HCT116 (cell line): ENCODE measurements at regions of chr7 and their contacts with region 1.

Region 1: DNA sequence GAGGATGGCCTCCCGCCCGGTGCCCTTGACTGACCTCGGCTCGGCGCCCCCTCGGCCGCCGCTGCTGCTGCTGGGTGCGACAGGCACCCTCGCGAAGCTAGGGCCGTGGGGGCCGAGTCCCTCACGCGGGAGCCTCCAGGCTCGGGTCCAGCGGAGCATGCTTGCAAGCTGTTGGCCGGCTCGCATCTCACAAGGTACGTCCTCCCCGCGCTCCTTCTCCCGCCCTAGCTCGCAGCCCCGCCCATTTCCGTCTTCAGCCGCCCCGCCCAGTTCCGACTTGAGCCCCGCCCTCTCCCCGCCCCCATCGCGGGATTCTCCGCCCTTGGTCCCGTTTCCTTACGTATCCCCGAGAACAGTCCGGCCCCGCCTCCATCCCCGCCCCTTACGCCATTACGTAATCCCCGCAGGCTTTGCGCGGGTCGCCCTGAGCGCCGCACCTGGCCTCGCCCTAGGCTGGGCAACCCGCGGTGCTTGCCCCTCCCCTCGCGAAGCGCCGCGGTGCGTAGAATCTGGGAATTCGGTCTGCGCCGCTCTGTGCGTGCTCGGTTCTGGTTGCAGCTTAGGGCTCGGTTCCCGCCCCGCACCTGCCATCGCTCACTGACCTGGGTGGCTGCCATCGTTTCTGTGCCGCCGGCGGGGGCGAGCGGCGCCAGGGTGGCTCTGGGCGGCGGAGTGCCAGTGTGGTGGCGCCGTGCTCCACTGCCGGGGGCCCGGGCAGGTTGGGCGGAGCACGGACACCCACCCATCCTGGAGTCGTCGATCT is at the start of gene ABHD11:
- DNase-seq: peak; percentile 95
- ATAC-seq: peak; percentile 68
- H3K4me3 ChIP-seq: peak within 1 kb of the TSS; percentile 81 to 91
- H3K27ac ChIP-seq: peak within 1 kb of the TSS; percentile 95
- H3K4me1 ChIP-seq: peaks cover 52 to 84% of the 10 kb centered on the region in 2 experiments
- H3K27me3 ChIP-seq: no peaks in the 10 kb centered on the region
- CTCF ChIP-seq: no peak
- POLR2A ChIP-seq: peak; percentile 87
- RAD21 ChIP-seq: no peak
- total RNA-seq, gene ABHD11: 69.8 TPM

Region 2: DNA sequence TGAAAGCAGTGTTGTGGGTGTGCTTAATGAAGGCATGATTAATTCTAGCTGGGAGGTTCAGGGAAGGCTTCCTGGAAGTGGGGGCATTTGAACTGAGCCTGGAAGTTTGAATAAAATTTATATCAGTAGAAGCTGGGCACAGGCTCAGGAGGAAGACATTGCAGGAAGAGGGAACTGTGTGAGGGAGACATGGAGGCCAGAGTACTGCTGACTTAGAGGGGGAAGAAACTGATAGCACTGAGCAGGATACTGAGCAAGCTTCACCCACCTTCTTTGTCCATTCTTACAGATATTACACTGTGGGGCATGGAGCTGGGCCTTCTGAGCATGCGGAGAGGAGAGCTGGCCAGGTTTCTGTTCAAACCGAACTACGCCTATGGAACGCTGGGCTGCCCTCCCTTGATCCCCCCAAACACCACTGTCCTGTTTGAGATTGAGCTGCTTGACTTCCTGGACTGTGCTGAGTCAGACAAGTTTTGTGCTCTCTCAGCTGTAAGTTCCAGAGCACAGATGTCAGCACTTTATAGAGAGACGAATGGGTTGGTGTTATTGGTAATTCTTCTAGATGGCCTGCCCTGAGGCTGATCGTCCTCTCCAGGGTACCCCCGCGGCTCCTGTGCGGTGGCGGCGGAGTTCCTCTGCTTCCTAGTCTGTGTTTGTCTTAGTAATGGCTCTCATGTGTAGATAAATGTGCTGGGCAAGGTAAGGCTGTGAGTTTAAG is 408.8 kb before region 1 on chr7:
- CTCF ChIA-PET with region 1: no interaction called
- POLR2A ChIA-PET with region 1: no interaction called
- RAD21 ChIA-PET with region 1: no interaction called
- intact Hi-C with region 1: loop called (anchors 10 kb)
- DNase-seq: no peak
- ATAC-seq: no peak
- H3K4me3 ChIP-seq: no peak overlapping the region
- H3K27ac ChIP-seq: no peak overlapping the region
- H3K4me1 ChIP-seq: no peaks in the 10 kb centered on the region
- H3K27me3 ChIP-seq: no peaks in the 10 kb centered on the region
- CTCF ChIP-seq: no peak
- POLR2A ChIP-seq: no peak
- RAD21 ChIP-seq: no peak

Region 3: DNA sequence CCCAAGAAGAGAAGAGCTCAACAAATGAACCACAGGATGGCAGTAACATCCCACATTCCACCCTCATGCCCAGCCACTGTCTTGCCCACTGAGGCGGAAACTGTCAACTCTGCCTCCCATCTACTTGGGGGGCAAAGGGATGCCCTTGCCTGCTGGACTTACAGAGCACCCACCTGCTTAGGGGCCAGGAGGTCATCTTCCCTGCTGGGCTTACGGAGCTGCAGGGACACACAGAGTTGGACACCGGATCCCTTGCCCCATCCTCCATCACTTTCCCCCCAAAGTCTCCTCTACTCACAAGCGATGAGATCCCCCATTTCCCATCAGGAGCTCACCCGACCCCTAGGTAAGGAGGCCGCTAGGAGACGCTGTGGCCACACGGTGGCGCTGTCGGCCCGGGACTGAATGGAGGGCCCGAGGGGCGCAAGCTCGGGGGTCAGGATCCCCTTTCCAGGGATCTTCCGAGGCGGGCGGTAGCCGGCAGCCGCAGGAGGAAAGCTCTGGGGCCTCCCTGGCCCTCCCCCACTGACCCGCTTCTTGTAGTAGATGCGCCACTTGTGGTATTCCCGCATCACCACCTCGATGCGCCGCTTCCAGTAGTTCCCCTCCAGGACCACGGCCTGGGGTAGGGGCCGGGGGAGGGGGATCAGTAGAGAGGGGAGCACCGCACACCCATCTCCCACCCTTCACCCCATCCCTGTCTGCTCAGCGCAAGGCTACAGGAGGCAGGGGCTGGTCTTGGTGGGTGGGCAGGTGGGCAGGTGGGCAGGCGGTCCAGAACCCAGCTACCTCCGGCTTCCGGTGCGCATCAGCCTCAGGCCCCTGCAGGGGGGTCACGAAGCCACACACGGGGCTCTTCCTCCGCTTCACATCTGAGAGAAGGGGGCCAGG is 131.7 kb before region 1 on chr7:
- CTCF ChIA-PET with region 1: interaction called, 18 read pairs
- POLR2A ChIA-PET with region 1: interaction called, 3 read pairs
- RAD21 ChIA-PET with region 1: interaction called in 1 of 2 experiments, 7 read pairs
- intact Hi-C with region 1: loop called (anchors 1 kb)
- DNase-seq: no peak
- ATAC-seq: peak; percentile 71
- H3K4me3 ChIP-seq: no peak overlapping the region
- H3K27ac ChIP-seq: no peak overlapping the region
- H3K4me1 ChIP-seq: peaks cover 16 to 40% of the 10 kb centered on the region in 2 experiments
- H3K27me3 ChIP-seq: no peaks in the 10 kb centered on the region
- CTCF ChIP-seq: peak; percentile 89 to 99 (median 94)
- POLR2A ChIP-seq: no peak
- RAD21 ChIP-seq: peak; percentile 93

Region 4: GRCh38 chr7:73811760-73812168 is 73.0 kb after region 1 on chr7:
- CTCF ChIA-PET with region 1: interaction called, 4 read pairs
- POLR2A ChIA-PET with region 1: interaction called, 6 read pairs
- RAD21 ChIA-PET with region 1: no interaction called
- intact Hi-C with region 1: loop called (anchors 5 kb)
- DNase-seq: no peak
- ATAC-seq: peak; percentile 81
- H3K4me3 ChIP-seq: no peak overlapping the region
- H3K27ac ChIP-seq: 0 out of 2 replicates have a peak overlapping the region, but pooled peaks have one; percentile 13
- H3K4me1 ChIP-seq: peaks cover 43 to 70% of the 10 kb centered on the region in 2 experiments
- H3K27me3 ChIP-seq: no peaks in the 10 kb centered on the region
- CTCF ChIP-seq: peak; percentile 54 to 88 (median 87); a peak in 5 of 6 replicates
- POLR2A ChIP-seq: no peak
- RAD21 ChIP-seq: peak; percentile 90

Region 5: GRCh38 chr7:73851410-73852234 is 112.8 kb after region 1 on chr7:
- CTCF ChIA-PET with region 1: interaction called, 6 read pairs
- POLR2A ChIA-PET with region 1: interaction called, 9 read pairs
- RAD21 ChIA-PET with region 1: interaction called in 1 of 2 experiments, 3 read pairs
- intact Hi-C with region 1: loop called (anchors 1 kb)
- DNase-seq: peak; percentile 92
- ATAC-seq: peak; percentile 66
- H3K4me3 ChIP-seq: peak overlapping the region in 1 of 2 experiments; percentile 16; a peak in 1 of 4 replicates
- H3K27ac ChIP-seq: peak overlapping the region; percentile 94
- H3K4me1 ChIP-seq: peaks cover 43 to 72% of the 10 kb centered on the region in 2 experiments
- H3K27me3 ChIP-seq: no peaks in the 10 kb centered on the region
- CTCF ChIP-seq: no peak
- POLR2A ChIP-seq: no peak
- RAD21 ChIP-seq: no peak